IMR-90 (cell line): ENCODE measurements at regions of chr18 and their contacts with region 1.

Region 1: GRCh38 chr18:54983041-54983686 is 23.9 kb upstream of the CCDC68 start:
- DNase-seq: peak; percentile 76
- ATAC-seq: peak; percentile 90
- H3K4me3 ChIP-seq: no peak overlapping the region
- H3K27ac ChIP-seq: no peak overlapping the region
- H3K4me1 ChIP-seq: no peaks in the 10 kb centered on the region
- H3K27me3 ChIP-seq: no peaks in the 10 kb centered on the region
- CTCF ChIP-seq: peak; percentile 83
- POLR2A ChIP-seq: no peak
- RAD21 ChIP-seq: peak; percentile 89

Region 2: DNA sequence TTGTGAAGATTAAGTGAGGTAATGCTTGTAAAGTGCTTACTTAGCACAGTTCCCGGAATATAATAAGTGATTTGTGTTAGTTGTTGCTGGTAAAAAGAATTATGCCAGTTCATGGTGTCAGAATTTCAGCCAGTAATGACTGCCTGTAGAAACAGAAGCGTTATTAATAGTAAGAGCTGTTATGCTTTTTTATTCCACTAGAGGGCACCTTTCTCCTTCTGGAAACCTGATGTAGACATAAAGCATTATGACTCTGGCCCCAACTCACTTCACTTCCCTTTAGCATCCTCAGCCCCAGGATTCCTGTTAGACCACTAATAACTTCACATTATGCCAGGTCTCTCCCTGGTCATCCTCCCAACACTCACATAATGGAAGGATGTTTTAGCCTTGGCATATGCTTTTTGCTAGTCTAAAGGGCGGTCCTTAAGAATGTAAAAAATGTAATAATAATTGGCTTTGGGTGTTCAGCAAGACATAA is 590.6 kb before region 1 on chr18:
- CTCF ChIA-PET with region 1: no interaction called
- POLR2A ChIA-PET with region 1: no interaction called
- dilution Hi-C with region 1: no loop called
- in situ Hi-C with region 1: loop called (anchors 10 kb)
- intact Hi-C with region 1: loop called (anchors 5 kb)
- DNase-seq: peak; percentile 63
- ATAC-seq: peak; percentile 71
- H3K4me3 ChIP-seq: no peak overlapping the region
- H3K27ac ChIP-seq: no peak overlapping the region
- H3K4me1 ChIP-seq: no peaks in the 10 kb centered on the region
- H3K27me3 ChIP-seq: no peaks in the 10 kb centered on the region; the same call in 1 of the 2 replicates
- CTCF ChIP-seq: peak; percentile 73
- POLR2A ChIP-seq: no peak
- RAD21 ChIP-seq: peak; percentile 58

Region 3: DNA sequence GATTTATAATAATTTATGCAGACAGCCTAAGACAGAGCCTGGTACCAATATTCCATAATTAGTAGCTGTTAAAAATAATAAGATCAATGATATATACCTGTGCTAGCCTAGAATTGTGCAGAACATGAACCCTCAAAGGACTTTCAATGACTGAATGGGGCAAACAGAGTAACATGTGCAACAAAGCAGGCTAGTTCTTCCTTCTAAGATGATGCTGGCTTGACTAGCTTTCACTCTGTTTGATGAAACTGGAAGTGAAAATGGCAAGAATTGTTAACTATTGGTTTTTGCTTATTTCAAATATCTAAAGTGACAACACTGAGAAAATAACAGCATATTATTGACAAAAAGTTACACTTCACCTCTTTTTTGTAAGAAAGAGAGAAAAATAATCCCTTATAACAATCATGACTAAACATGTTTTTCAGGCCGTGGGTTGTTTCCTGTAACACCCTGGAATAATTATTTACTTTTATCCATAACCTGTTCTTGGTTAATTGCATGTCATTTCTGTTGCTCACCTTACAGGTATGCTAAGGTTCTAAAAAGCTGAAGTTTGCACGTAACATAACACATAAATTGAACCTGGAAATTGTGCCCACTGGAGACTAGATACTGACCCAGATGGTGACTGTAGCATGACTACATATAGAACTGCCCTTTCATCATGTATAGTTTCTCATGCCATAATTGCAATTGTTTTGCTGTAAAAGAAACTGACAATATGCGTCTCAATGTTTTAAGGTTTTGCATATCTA is 516.7 kb before region 1 on chr18:
- CTCF ChIA-PET with region 1: no interaction called
- POLR2A ChIA-PET with region 1: no interaction called
- dilution Hi-C with region 1: no loop called
- in situ Hi-C with region 1: loop called (anchors 25 kb)
- intact Hi-C with region 1: no loop called
- DNase-seq: no peak
- ATAC-seq: no peak
- H3K4me3 ChIP-seq: no peak overlapping the region
- H3K27ac ChIP-seq: no peak overlapping the region
- H3K4me1 ChIP-seq: no peaks in the 10 kb centered on the region
- H3K27me3 ChIP-seq: no peaks in the 10 kb centered on the region; the same call in 1 of the 2 replicates
- CTCF ChIP-seq: no peak
- POLR2A ChIP-seq: no peak
- RAD21 ChIP-seq: no peak

Region 4: DNA sequence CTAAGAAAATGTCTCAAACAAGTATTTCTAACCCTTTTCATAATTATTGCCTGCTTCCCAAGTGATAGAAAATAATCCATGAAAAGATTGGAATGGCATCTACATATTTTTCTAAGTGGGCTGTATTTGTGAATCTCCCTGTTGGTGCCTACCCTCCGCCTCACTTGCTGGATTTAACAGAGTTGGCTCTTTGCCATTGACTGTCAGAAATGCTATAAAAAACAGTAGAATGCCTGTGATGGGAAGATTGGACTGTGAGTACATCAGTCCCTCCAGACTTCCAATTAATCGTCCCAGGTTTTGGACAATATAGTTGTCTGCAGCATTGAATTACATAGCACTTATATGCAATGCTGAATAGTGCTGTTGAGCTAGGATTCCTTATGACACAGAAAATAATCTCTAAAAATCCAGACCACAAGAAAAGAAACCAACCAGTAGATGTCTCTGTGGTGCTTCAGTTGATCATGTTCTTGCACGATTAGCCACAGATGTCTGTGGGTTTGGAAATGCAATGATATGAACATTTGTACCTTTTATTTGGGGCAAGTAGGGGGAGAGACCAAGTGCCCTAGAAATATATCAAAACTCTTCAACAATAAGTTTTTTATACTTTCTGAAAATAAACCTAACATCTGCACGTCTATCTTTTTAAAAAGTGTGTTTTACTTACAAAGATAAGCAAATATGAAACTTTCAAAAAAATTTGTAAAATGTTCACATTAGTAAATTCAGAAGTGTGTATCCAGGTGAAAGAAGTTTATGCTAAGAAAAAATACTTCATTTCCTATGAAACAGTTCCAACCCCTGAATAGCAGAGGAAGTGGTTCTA is 303.6 kb before region 1 on chr18:
- CTCF ChIA-PET with region 1: interaction called, 22 read pairs
- POLR2A ChIA-PET with region 1: no interaction called
- dilution Hi-C with region 1: no loop called
- in situ Hi-C with region 1: loop called (anchors 5 kb)
- intact Hi-C with region 1: loop called (anchors 1 kb)
- DNase-seq: peak; percentile 83
- ATAC-seq: peak; percentile 95
- H3K4me3 ChIP-seq: no peak overlapping the region
- H3K27ac ChIP-seq: no peak overlapping the region
- H3K4me1 ChIP-seq: no peaks in the 10 kb centered on the region
- H3K27me3 ChIP-seq: no peaks in the 10 kb centered on the region
- CTCF ChIP-seq: peak; percentile 84
- POLR2A ChIP-seq: no peak
- RAD21 ChIP-seq: peak; percentile 93

Region 5: DNA sequence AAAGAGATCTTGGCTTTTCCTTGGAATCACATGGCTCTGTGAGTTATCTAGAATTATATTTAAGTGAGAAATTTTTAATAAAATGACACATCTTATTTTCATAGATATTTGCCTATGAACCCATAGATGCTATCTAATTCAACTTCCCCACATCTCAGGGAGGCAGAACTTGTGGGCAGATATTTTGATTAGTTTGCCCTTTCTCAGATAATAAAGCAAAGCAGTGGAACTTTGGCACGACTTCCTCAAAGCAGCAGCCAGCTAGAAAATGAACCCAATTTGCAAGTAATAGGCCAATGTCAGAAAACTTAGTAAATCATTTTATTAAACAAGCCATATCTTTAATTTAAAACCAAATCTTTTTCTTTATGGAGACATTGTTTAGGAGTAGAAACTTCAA is 122.2 kb before region 1 on chr18:
- CTCF ChIA-PET with region 1: no interaction called
- POLR2A ChIA-PET with region 1: no interaction called
- dilution Hi-C with region 1: no loop called
- in situ Hi-C with region 1: no loop called
- intact Hi-C with region 1: no loop called
- DNase-seq: no peak
- ATAC-seq: no peak
- H3K4me3 ChIP-seq: no peak overlapping the region
- H3K27ac ChIP-seq: no peak overlapping the region
- H3K4me1 ChIP-seq: no peaks in the 10 kb centered on the region
- H3K27me3 ChIP-seq: no peaks in the 10 kb centered on the region
- CTCF ChIP-seq: no peak
- POLR2A ChIP-seq: no peak
- RAD21 ChIP-seq: no peak

Region 6: DNA sequence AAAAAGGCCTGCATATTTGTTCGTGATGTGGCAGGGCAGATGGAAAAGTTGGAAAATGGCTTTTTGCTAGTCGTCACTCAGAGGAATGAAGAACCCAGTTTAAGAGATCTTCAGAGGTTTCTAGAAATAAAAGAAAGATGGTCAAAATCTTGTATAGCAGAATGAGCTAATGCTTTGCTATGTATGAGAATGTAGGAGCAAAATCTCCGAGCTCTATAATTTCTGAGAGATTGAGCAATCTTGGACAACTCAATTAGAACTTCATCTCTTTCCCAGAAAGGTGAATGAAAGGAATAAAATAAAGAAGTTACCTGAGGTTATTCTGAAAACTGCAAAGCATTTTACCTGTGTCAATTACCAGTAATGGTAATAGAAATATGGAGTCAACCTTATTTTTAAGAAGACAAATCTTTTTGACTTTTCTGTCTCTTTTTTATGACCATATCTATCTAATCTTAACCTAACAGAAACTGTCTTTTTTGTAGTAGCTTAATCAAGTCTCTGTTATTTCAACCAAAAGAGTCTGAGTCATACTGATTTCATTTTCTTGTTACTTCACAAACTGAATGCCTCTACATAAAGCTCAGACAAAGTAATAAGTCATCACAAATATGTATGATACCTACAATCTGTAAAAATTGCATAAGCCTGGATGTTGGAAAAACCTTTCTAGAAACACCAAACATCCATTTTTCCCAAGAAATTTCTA is 56.4 kb before region 1 on chr18:
- CTCF ChIA-PET with region 1: no interaction called
- POLR2A ChIA-PET with region 1: no interaction called
- dilution Hi-C with region 1: no loop called
- in situ Hi-C with region 1: loop called (anchors 10 kb)
- intact Hi-C with region 1: no loop called
- DNase-seq: peak; percentile 57
- ATAC-seq: no peak
- H3K4me3 ChIP-seq: no peak overlapping the region
- H3K27ac ChIP-seq: no peak overlapping the region
- H3K4me1 ChIP-seq: no peaks in the 10 kb centered on the region
- H3K27me3 ChIP-seq: no peaks in the 10 kb centered on the region
- CTCF ChIP-seq: no peak
- POLR2A ChIP-seq: no peak
- RAD21 ChIP-seq: no peak

Region 7: DNA sequence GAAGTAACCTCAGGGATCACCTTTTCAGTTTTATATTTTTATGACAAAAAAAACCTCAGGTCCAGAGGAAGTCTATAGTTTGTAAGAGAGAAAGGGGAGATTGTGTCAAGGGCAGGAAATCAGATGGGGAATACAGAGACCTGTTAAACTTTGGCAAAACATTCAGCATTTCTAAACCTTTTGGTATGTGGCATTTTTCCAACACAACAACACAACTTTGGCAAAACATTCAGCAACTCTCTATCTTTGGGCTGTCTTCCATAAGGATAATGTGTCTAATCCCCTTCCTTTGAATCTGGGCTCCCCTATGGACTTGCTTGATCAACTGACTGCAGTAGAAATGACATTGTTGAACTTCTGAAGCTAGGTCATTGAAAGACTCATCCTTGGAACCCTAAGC is 196.7 kb after region 1 on chr18:
- CTCF ChIA-PET with region 1: no interaction called
- POLR2A ChIA-PET with region 1: no interaction called
- dilution Hi-C with region 1: no loop called
- in situ Hi-C with region 1: no loop called
- intact Hi-C with region 1: no loop called
- DNase-seq: peak; percentile 12
- ATAC-seq: no peak
- H3K4me3 ChIP-seq: no peak overlapping the region
- H3K27ac ChIP-seq: no peak overlapping the region
- H3K4me1 ChIP-seq: no peaks in the 10 kb centered on the region
- H3K27me3 ChIP-seq: peaks cover 10% of the 10 kb centered on the region
- CTCF ChIP-seq: no peak
- POLR2A ChIP-seq: no peak
- RAD21 ChIP-seq: no peak

Region 8: GRCh38 chr18:55251254-55251971 is 268.2 kb after region 1 on chr18:
- CTCF ChIA-PET with region 1: no interaction called
- POLR2A ChIA-PET with region 1: no interaction called
- dilution Hi-C with region 1: no loop called
- in situ Hi-C with region 1: no loop called
- intact Hi-C with region 1: no loop called
- DNase-seq: peak; percentile 38
- ATAC-seq: peak; percentile 44
- H3K4me3 ChIP-seq: no peak overlapping the region
- H3K27ac ChIP-seq: no peak overlapping the region
- H3K4me1 ChIP-seq: peaks cover 11% of the 10 kb centered on the region
- H3K27me3 ChIP-seq: no peaks in the 10 kb centered on the region
- CTCF ChIP-seq: no peak
- POLR2A ChIP-seq: no peak
- RAD21 ChIP-seq: no peak